Gastrocnemius medialis (tissue), 4 donors: ENCODE measurements at regions of chr6 and their contacts with region 1.

Region 1: GRCh38 chr6:129251669-129252376 is 368.9 kb downstream of the LAMA2 start:
- DNase-seq: no peak
- ATAC-seq: peak in 1 of 2 donors; percentile 70
- H3K4me3 ChIP-seq: no peak overlapping the region
- H3K27ac ChIP-seq: no peak overlapping the region
- H3K4me1 ChIP-seq: no peaks in the 10 kb centered on the region
- H3K27me3 ChIP-seq: no peaks in the 10 kb centered on the region
- CTCF ChIP-seq: peak; percentile 53 to 77 (median 70)
- POLR2A ChIP-seq: no peak

Region 2: DNA sequence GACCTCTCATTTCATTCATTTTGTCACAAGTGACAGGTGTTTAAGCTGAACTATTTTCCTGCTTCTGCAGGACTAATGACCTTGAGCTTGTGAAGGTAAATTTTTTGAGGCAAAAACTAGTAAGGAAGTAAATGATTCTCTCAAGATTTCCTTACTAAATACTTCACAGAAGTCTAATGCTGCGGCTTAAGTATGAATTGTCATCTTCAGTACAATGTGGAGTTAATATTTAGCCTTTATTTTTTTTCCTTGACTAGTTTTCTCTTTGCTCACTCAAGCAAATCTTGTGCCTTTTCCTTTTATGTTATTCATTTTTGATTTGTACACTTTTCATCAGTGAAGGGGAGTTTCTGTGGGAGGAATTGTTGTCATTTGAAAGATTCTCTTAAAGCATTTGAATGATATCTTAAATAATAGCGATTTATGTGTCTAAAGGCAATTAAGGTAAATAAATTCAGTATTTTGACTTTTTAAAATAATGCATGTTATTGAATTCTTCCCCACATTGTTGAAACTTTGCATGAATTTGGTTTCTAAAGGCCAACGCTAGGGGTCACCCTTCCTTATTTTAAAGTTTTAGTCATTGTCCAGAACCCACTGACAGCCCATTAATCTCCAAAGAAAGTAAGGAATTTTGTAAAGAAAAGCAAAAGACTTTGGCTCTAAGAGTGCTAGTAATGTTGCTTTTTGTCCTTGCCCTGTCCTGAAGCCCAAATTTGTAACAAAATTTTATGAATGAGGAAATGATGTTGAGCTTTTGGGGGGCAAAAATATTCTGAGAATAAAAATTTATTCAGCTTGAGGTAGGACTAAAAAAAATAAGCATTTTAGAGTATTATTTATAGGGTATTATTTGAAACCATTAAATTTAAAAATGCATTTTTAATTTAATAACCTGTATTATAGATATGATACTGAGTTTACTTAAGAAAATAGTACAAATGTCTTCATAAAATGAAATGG is 526.3 kb before region 1 on chr6:
- in situ Hi-C with region 1: no loop called
- intact Hi-C with region 1: loop called (anchors 5 kb)
- DNase-seq: no peak
- ATAC-seq: no peak
- H3K4me3 ChIP-seq: no peak overlapping the region
- H3K27ac ChIP-seq: no peak overlapping the region
- H3K4me1 ChIP-seq: no peaks in the 10 kb centered on the region
- H3K27me3 ChIP-seq: no peaks in the 10 kb centered on the region
- CTCF ChIP-seq: peak; percentile 20 to 56 (median 35)
- POLR2A ChIP-seq: no peak

Region 3: GRCh38 chr6:128807577-128807976 is 444.2 kb before region 1 on chr6:
- in situ Hi-C with region 1: loop called in 1 of 4 experiments (anchors 25 kb)
- intact Hi-C with region 1: loop called (anchors 5 kb)
- DNase-seq: no peak
- ATAC-seq: no peak
- H3K4me3 ChIP-seq: no peak overlapping the region
- H3K27ac ChIP-seq: no peak overlapping the region
- H3K4me1 ChIP-seq: peaks cover 0 to 3% of the 10 kb centered on the region in 2 donors
- H3K27me3 ChIP-seq: no peaks in the 10 kb centered on the region
- CTCF ChIP-seq: peak in 3 of 5 experiments; percentile 20 to 40 (median 31)
- POLR2A ChIP-seq: no peak

Region 4: GRCh38 chr6:128882991-128883611 is 368.7 kb before region 1 on chr6 and contains the start of gene LAMA2:
- in situ Hi-C with region 1: no loop called
- intact Hi-C with region 1: loop called (anchors 5 kb)
- DNase-seq: peak; percentile 75 to 86
- ATAC-seq: peak; percentile 89 to 93
- H3K4me3 ChIP-seq: peak within 1 kb of the TSS; percentile 66 to 83 (median 76)
- H3K27ac ChIP-seq: peak within 1 kb of the TSS; percentile 76 to 85 (median 81)
- H3K4me1 ChIP-seq: peaks cover 7 to 8% of the 10 kb centered on the region in 2 donors
- H3K27me3 ChIP-seq: no peaks in the 10 kb centered on the region
- CTCF ChIP-seq: peak in 2 of 5 experiments; percentile 21 to 33
- POLR2A ChIP-seq: peak; percentile 55 to 85
- total RNA-seq, gene LAMA2: 52.9 to 113 (median 71.3) TPM

Region 5: GRCh38 chr6:129130959-129131681 is 120.7 kb before region 1 on chr6:
- in situ Hi-C with region 1: no loop called
- intact Hi-C with region 1: loop called (anchors 5 kb)
- DNase-seq: peak; percentile 60 to 79
- ATAC-seq: peak; percentile 63 to 71
- H3K4me3 ChIP-seq: no peak overlapping the region
- H3K27ac ChIP-seq: peak overlapping the region; percentile 67 to 85 (median 72)
- H3K4me1 ChIP-seq: peaks cover 26 to 37% of the 10 kb centered on the region in 2 donors
- H3K27me3 ChIP-seq: no peaks in the 10 kb centered on the region
- CTCF ChIP-seq: no peak
- POLR2A ChIP-seq: peak; percentile 14 to 38

Region 6: GRCh38 chr6:129475477-129476247 is 223.8 kb after region 1 on chr6:
- in situ Hi-C with region 1: no loop called
- intact Hi-C with region 1: no loop called
- DNase-seq: no peak
- ATAC-seq: no peak
- H3K4me3 ChIP-seq: no peak overlapping the region
- H3K27ac ChIP-seq: no peak overlapping the region
- H3K4me1 ChIP-seq: no peaks in the 10 kb centered on the region
- H3K27me3 ChIP-seq: no peaks in the 10 kb centered on the region
- CTCF ChIP-seq: no peak
- POLR2A ChIP-seq: no peak

Region 7: GRCh38 chr6:129644567-129645015 is 392.8 kb after region 1 on chr6:
- in situ Hi-C with region 1: no loop called
- intact Hi-C with region 1: no loop called
- DNase-seq: no peak
- ATAC-seq: no peak
- H3K4me3 ChIP-seq: no peak overlapping the region
- H3K27ac ChIP-seq: peak overlapping the region; percentile 26 to 63 (median 51)
- H3K4me1 ChIP-seq: peaks cover 30 to 49% of the 10 kb centered on the region in 2 donors
- H3K27me3 ChIP-seq: no peaks in the 10 kb centered on the region
- CTCF ChIP-seq: no peak
- POLR2A ChIP-seq: no peak